ENCODE measurements at regions of chr5 and their contacts with region 1.

Region 1: GRCh38 chr5:124748687-124749594 is 2.5 kb upstream of the ZNF608 start:
- DNase-seq: peak; percentile 94
- H3K4me3 ChIP-seq: peak overlapping the region; percentile 71 to 75 (median 75)
- H3K27ac ChIP-seq: peak overlapping the region; percentile 92
- H3K4me1 ChIP-seq: peaks cover 22% of the 10 kb centered on the region
- H3K27me3 ChIP-seq: no peaks in the 10 kb centered on the region
- CTCF ChIP-seq: peak in 1 of 2 donors; percentile 3

Region 2: GRCh38 chr5:124330595-124331220 is 418.2 kb before region 1 on chr5:
- CTCF ChIA-PET with region 1: no interaction called
- dilution Hi-C with region 1: no loop called
- in situ Hi-C with region 1: no loop called
- intact Hi-C with region 1: loop called (anchors 10 kb)
- DNase-seq: peak; percentile 42
- H3K4me3 ChIP-seq: no peak overlapping the region
- H3K27ac ChIP-seq: no peak overlapping the region
- H3K4me1 ChIP-seq: no peaks in the 10 kb centered on the region
- H3K27me3 ChIP-seq: peaks cover 7% of the 10 kb centered on the region
- CTCF ChIP-seq: no peak

Region 3: GRCh38 chr5:124599028-124599973 is 149.6 kb before region 1 on chr5:
- CTCF ChIA-PET with region 1: no interaction called
- dilution Hi-C with region 1: no loop called
- in situ Hi-C with region 1: loop called in 1 of 2 experiments (anchors 10 kb)
- intact Hi-C with region 1: loop called (anchors 10 kb)
- DNase-seq: peak; percentile 59
- H3K4me3 ChIP-seq: no peak overlapping the region
- H3K27ac ChIP-seq: no peak overlapping the region
- H3K4me1 ChIP-seq: peaks cover 23% of the 10 kb centered on the region
- H3K27me3 ChIP-seq: no peaks in the 10 kb centered on the region
- CTCF ChIP-seq: no peak

Region 4: DNA sequence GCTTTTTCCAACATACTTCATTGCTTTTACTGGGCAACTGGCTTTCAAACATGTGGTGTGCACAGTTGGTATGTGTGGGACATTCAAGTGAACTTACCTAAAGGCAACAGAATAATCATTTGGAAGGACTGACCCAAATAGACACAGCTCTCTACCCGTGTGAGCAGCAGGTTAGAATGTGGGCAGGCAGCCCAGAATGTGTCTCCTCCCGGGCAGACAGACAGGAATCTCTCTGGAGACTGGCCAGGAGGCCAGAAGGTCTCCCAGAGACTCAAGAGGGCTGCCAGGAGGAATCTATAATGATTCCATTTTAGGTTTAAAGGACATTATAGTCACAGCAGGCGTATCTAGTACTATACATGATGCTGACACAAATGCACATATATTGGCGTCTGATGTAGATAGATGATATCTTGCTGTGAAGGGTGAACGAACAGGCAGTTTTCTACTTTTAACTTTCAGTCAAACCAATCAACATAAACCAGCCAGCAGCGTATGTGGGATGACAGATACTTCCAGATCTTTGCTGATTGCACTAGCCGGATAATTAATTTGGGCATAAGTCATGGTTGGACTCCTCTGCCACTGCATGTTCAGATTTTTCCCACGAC is 294.9 kb after region 1 on chr5:
- CTCF ChIA-PET with region 1: no interaction called
- dilution Hi-C with region 1: no loop called
- in situ Hi-C with region 1: no loop called
- intact Hi-C with region 1: loop called (anchors 1 kb)
- DNase-seq: peak; percentile 66
- H3K4me3 ChIP-seq: no peak overlapping the region
- H3K27ac ChIP-seq: no peak overlapping the region
- H3K4me1 ChIP-seq: peaks cover 20% of the 10 kb centered on the region
- H3K27me3 ChIP-seq: no peaks in the 10 kb centered on the region
- CTCF ChIP-seq: no peak

Region 5: GRCh38 chr5:125227333-125228095 is 478.6 kb after region 1 on chr5:
- CTCF ChIA-PET with region 1: no interaction called
- dilution Hi-C with region 1: no loop called
- in situ Hi-C with region 1: no loop called
- intact Hi-C with region 1: loop called (anchors 5 kb)
- DNase-seq: no peak
- H3K4me3 ChIP-seq: no peak overlapping the region
- H3K27ac ChIP-seq: no peak overlapping the region
- H3K4me1 ChIP-seq: no peaks in the 10 kb centered on the region
- H3K27me3 ChIP-seq: no peaks in the 10 kb centered on the region
- CTCF ChIP-seq: peak; percentile 47 to 55

Region 6: DNA sequence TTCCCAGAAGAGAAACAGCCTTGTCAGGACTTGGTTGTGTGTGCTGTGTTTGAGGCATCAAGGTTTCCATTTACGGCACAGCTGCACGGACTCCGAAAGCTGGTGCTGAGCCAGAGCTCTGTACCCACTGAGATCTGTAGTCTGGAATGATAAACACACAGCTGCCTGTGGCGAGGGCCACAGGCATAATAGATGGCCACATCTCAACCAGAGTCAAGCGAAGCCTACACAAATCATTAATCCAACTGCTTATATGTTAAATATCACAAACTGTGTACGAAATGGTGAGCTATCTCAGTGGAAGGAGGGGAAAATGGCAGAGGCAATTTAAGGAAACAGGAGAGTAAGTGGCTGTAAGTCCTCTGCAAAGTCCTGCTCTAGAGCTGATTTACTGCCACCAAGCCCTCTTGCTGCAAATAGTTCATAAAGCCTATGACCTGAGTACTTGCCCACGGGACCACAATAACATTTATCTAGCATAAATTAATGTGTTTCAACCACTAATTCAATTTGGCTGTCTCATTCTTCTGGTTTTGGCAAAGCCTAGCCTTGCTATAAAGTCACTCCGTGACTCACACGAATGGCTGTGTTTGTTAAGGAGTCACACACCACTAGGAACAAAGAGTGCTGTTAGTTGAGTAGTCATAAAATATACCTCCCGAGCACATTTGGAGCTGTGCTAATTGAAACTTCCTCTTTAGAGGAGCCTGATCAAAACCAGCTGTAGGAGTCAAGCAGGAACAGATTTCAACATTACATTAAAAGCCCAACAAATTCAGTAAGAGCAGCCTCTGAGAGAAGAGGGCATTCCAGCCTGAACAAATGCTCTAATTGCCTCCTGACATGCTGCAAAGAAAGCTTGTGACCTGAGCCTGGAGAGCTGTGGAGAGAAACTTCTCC is 736.1 kb after region 1 on chr5:
- CTCF ChIA-PET with region 1: no interaction called
- dilution Hi-C with region 1: no loop called
- in situ Hi-C with region 1: no loop called
- intact Hi-C with region 1: loop called (anchors 10 kb)
- DNase-seq: peak; percentile 99
- H3K4me3 ChIP-seq: peak overlapping the region; percentile 6 to 17 (median 8)
- H3K27ac ChIP-seq: peak overlapping the region; percentile 97
- H3K4me1 ChIP-seq: peaks cover 38% of the 10 kb centered on the region
- H3K27me3 ChIP-seq: no peaks in the 10 kb centered on the region
- CTCF ChIP-seq: no peak

Measured in mammary epithelial cell (primary cell).